Caco-2 (cell line): ENCODE measurements at regions of chr6 and their contacts with region 1.

Region 1: DNA sequence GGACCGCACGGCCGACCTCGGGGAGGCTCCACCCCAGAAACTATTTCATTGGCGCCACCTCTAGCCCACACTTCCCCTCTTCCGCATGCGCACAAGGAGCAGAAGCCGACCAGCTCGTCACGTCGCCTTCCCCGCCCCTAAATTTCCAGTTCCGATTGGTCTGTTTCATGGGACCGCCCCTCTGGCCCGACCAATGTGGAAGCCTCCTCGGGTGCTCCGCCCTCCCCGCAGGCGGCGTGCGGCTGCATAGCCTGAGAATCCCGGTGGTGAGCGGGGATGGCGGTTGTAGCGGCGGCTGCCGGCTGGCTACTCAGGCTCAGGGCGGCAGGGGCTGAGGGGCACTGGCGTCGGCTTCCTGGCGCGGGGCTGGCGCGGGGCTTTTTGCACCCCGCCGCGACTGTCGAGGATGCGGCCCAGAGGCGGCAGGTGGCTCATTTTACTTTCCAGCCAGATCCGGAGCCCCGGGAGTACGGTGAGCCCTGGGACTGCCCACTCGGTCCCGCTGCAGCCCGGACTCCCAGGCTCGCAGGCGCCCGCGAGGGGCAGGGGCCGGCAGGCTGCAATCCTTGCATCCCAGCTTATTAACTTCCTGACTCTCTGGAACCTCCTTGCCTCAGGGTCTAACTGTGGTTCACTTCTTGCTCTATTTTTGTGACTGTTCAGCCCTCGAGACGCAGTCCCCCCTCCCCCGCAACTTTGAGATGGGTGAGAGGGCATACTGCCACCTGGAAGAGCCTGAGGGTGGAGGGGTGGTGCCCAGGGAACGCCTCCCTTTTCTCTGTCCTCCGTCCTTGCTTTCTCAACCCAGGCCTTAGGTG is at the start of gene BCKDHB:
- DNase-seq: peak; percentile 99
- H3K4me3 ChIP-seq: peak within 1 kb of the TSS; percentile 89
- H3K4me3 Mint-ChIP-seq: peak within 1 kb of the TSS; percentile 93
- H3K27ac Mint-ChIP-seq: peak within 1 kb of the TSS; percentile 83
- H3K4me1 ChIP-seq: peaks cover 6% of the 10 kb centered on the region
- H3K4me1 Mint-ChIP-seq: peaks cover 16% of the 10 kb centered on the region
- H3K27me3 ChIP-seq: no peaks in the 10 kb centered on the region
- H3K27me3 Mint-ChIP-seq: no peaks in the 10 kb centered on the region
- CTCF ChIP-seq: no peak
- total RNA-seq, gene BCKDHB: 28.0 and 29.7 TPM in 2 replicates

Region 2: DNA sequence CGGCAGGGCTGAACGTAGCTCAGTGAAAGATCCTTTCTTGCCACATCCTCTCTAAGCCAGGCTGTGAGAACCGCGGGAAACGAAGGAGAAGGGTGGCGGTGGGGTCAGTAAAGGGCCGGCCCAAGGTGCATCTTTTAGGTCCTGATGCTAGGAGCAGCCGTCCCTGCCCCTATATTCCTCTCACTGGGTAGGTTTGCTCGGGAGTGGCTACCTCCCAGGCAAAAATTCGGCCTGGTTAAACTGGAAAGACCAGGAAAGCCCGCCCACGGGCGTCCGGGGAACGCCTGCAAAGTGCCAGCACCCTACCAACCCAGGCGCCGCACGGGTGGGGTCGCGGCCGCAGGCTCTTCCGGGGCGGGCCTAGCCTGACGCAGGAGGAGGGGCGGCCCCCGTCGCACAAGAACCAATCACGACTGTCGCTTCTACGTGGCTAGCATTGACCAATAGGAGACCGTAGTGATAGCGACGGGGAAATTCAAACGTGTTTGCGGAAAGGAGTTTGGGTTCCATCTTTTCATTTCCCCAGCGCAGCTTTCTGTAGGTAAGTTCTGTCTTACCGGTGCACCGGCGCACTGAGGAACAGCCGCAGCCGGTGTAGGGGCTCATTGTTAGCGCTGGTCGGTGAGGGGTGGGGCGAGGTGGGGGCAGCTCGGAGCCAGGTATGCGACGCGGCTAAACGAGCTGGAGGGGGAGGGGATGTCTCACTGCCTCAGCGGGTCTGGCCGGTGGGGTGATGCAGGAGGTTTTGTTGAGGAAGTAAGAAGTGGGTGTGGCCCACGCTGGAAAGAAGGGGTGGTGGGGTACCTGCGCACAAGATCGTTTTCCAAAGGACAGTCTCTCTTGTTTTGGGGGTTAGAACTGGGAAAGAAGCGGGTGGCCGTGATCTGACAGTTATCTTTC is 102.2 kb before region 1 on chr6 and contains the start of gene TTK:
- CTCF ChIA-PET with region 1: no interaction called
- POLR2A ChIA-PET with region 1: interaction called, 5 read pairs
- intact Hi-C with region 1: loop called (anchors 5 kb)
- DNase-seq: peak; percentile 94 to 95
- H3K4me3 ChIP-seq: peak within 1 kb of the TSS; percentile 93
- H3K4me3 Mint-ChIP-seq: peak within 1 kb of the TSS; percentile 86
- H3K27ac Mint-ChIP-seq: peak within 1 kb of the TSS; percentile 75
- H3K4me1 ChIP-seq: peaks cover 12% of the 10 kb centered on the region; the same call in 1 of the 2 replicates
- H3K4me1 Mint-ChIP-seq: peaks cover 9% of the 10 kb centered on the region
- H3K27me3 ChIP-seq: no peaks in the 10 kb centered on the region
- H3K27me3 Mint-ChIP-seq: no peaks in the 10 kb centered on the region
- CTCF ChIP-seq: no peak
- total RNA-seq, gene TTK: 37.4 and 40.0 TPM in 2 replicates

Region 3: DNA sequence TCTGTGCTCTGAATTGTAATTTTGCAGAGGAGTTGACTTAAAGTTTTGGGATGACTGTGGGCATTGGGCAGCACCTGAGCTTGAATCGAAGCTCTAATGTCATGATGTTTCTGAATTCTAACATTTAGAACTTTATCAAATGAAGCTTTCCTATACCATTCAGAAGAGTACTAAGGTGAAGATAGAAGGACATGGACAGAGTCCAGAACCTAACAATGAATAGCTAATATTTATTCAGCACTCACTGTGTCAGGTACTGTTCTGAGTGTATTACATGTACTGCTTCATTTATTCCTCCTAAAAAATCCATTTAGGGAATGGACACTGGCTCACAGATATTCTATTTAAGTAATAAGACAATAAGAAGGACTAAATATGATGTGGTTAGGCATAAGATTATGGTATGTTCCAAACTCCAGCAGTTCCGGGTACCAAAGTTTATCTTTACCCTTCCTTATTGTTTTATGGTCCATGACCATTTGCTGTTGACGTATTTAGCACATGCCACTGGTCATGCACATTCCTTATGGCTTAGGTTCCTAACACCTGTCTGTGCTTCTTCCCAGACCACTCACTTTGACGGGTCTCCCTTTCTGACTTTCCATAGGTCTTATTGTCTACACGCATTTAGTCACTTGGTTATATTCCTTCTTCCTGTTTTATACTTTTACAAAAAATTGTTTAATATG is 20.2 kb after region 1 on chr6:
- CTCF ChIA-PET with region 1: interaction called, 3 read pairs
- POLR2A ChIA-PET with region 1: interaction called, 5 read pairs
- intact Hi-C with region 1: loop called (anchors 1 kb)
- DNase-seq: peak; percentile 12 to 35
- H3K4me3 ChIP-seq: no peak overlapping the region
- H3K4me3 Mint-ChIP-seq: no peak overlapping the region
- H3K27ac Mint-ChIP-seq: peak overlapping the region; percentile 54
- H3K4me1 ChIP-seq: peaks cover 35% of the 10 kb centered on the region
- H3K4me1 Mint-ChIP-seq: peaks cover 31% of the 10 kb centered on the region
- H3K27me3 ChIP-seq: no peaks in the 10 kb centered on the region
- H3K27me3 Mint-ChIP-seq: no peaks in the 10 kb centered on the region
- CTCF ChIP-seq: no peak

Region 4: DNA sequence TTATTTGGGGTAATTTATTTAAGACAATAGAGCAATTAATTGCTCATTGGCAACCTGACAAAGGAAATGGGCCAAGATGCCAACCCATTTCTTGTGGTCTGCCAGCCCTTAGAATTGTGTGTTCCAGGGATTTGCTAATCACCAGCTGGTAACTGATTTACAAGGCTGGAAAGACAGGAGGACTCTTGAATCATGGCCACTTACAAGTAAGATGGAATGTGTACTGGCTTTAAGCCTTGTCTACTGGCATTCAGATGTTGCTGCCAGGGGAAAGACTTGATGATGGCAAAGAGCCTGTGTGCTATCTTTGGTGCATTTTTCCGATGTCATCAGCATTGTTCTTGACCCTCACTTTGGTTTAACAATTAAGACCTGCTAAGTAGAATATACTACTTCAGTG is 90.8 kb after region 1 on chr6:
- CTCF ChIA-PET with region 1: no interaction called
- POLR2A ChIA-PET with region 1: no interaction called
- intact Hi-C with region 1: loop called (anchors 10 kb)
- DNase-seq: no peak
- H3K4me3 ChIP-seq: no peak overlapping the region
- H3K4me3 Mint-ChIP-seq: no peak overlapping the region
- H3K27ac Mint-ChIP-seq: no peak overlapping the region
- H3K4me1 ChIP-seq: no peaks in the 10 kb centered on the region
- H3K4me1 Mint-ChIP-seq: no peaks in the 10 kb centered on the region
- H3K27me3 ChIP-seq: no peaks in the 10 kb centered on the region
- H3K27me3 Mint-ChIP-seq: no peaks in the 10 kb centered on the region
- CTCF ChIP-seq: no peak

Region 5: DNA sequence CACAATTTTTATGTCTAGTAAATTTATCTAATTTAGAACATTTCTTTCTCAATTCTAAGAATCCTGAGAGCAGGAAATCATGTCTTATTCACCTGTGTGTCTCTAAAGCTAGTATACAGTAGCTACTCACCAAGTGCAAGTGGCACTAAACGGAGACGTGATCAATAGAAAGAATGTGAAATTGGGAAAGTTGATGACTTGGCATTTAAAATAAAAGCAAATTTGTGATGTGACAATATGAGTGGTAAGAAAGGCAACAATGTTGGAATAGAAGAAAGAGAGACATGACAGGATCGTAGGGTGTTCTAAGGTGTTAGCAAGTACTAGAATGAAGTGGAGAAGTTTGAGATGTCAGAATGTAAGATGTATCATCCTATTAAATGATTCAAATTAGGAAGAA is 725.7 kb after region 1 on chr6:
- CTCF ChIA-PET with region 1: no interaction called
- POLR2A ChIA-PET with region 1: no interaction called
- intact Hi-C with region 1: no loop called
- DNase-seq: no peak
- H3K4me3 ChIP-seq: no peak overlapping the region
- H3K4me3 Mint-ChIP-seq: no peak overlapping the region
- H3K27ac Mint-ChIP-seq: no peak overlapping the region
- H3K4me1 ChIP-seq: no peaks in the 10 kb centered on the region
- H3K4me1 Mint-ChIP-seq: no peaks in the 10 kb centered on the region
- H3K27me3 ChIP-seq: no peaks in the 10 kb centered on the region
- H3K27me3 Mint-ChIP-seq: no peaks in the 10 kb centered on the region
- CTCF ChIP-seq: no peak